Natural killer cell (primary cell): ENCODE measurements at regions of chr5 and their contacts with region 1.

Region 1: GRCh38 chr5:62412537-62413329 is at the start of gene IPO11:
- DNase-seq: peak; percentile 99 to 100
- ATAC-seq: peak; percentile 94 to 97 (median 94)
- H3K4me3 ChIP-seq: peak within 1 kb of the TSS; percentile 79
- H3K4me3 Mint-ChIP-seq: peak within 1 kb of the TSS; percentile 96
- H3K27ac ChIP-seq: peak within 1 kb of the TSS; percentile 60
- H3K27ac Mint-ChIP-seq: peak within 1 kb of the TSS; percentile 92 to 93
- H3K4me1 ChIP-seq: peaks cover 13% of the 10 kb centered on the region
- H3K4me1 Mint-ChIP-seq: peaks cover 15 to 17% of the 10 kb centered on the region in 2 donors
- H3K27me3 ChIP-seq: no peaks in the 10 kb centered on the region
- H3K27me3 Mint-ChIP-seq: no peaks in the 10 kb centered on the region
- CTCF ChIP-seq: no peak
- total RNA-seq, gene IPO11: 16.6 to 31.4 (median 30.7) TPM

Region 2: DNA sequence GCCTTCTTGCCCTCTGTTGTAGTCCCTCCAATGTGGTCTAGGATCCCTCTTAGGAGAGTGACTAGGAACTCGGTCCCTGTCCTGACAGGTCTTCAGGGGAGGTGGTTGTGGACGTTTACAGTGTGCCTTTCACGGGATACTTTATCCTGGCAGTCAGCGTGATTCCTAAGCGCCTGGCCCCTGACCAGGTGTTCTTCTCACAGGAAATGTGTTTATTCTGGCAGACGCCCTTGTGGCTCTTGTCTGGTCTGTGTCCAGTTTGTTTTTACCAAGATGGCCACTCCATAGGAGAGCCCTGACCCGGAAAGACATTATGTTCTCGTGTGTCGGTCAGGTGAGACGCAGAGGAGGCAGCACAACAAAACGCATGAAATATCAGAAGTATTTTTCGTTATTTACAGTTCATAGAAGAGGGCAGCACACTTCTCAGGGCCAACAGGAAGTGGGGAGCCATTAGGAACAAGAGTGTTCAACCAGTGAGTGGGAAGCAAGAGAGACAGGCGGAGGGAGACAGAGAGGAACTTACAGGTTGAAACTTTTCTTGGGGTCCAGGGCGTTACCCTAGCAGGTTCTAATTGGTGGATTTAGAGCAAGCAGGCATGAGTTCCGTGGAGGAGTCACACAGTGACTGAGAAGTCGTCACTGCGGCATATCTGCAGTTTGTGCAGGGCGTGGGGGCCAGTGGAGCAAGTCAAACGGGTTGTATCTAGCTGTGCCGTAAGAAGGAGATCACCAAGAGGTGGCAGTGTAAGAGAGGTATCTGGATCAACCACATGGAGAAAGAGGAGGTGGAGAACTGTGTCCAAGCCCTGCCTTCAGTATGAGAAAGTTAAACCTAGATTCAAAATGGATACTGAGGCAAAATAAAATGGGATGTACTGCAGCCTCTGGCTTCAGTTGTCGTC is 667.8 kb before region 1 on chr5:
- intact Hi-C with region 1: no loop called
- DNase-seq: no peak
- ATAC-seq: no peak
- H3K4me3 ChIP-seq: no peak overlapping the region
- H3K4me3 Mint-ChIP-seq: no peak overlapping the region
- H3K27ac ChIP-seq: no peak overlapping the region
- H3K27ac Mint-ChIP-seq: no peak overlapping the region
- H3K4me1 ChIP-seq: no peaks in the 10 kb centered on the region
- H3K4me1 Mint-ChIP-seq: no peaks in the 10 kb centered on the region
- H3K27me3 ChIP-seq: no peaks in the 10 kb centered on the region
- H3K27me3 Mint-ChIP-seq: no peaks in the 10 kb centered on the region
- CTCF ChIP-seq: no peak

Region 3: DNA sequence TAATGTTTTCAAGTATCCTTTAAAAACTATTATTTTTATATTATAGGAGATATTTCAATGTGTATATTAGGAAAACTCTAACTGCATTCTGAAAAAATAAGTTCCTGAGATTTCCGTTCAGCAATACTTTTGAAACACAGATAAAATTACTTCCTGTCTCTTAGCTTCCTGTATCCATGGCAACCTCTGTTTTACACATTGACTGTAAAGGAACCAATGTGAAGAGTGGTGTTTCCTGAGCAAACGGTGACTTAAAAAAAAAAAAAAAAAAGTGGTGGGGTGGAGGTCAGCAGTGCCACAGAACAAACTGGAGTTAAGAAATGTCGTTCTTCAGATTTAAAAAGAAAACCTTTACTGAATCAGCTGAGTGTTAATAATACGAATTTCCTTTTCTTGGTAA is 165.8 kb after region 1 on chr5 and contains the start of gene LRRC70:
- intact Hi-C with region 1: loop called (anchors 1 kb)
- DNase-seq: peak in 1 of 2 donors; percentile 88
- ATAC-seq: peak; percentile 91 to 96 (median 91)
- H3K4me3 ChIP-seq: peak within 1 kb of the TSS; percentile 16
- H3K4me3 Mint-ChIP-seq: peak within 1 kb of the TSS; percentile 95
- H3K27ac ChIP-seq: peak within 1 kb of the TSS; percentile 48
- H3K27ac Mint-ChIP-seq: peak within 1 kb of the TSS; percentile 84 to 88
- H3K4me1 ChIP-seq: no peaks in the 10 kb centered on the region
- H3K4me1 Mint-ChIP-seq: peaks cover 42 to 49% of the 10 kb centered on the region in 2 donors
- H3K27me3 ChIP-seq: no peaks in the 10 kb centered on the region
- H3K27me3 Mint-ChIP-seq: no peaks in the 10 kb centered on the region
- CTCF ChIP-seq: no peak
- total RNA-seq, gene LRRC70: 17.6 to 29.5 (median 21.2) TPM